ENCODE measurements at regions of chr1 and their contacts with region 1.

Region 1: DNA sequence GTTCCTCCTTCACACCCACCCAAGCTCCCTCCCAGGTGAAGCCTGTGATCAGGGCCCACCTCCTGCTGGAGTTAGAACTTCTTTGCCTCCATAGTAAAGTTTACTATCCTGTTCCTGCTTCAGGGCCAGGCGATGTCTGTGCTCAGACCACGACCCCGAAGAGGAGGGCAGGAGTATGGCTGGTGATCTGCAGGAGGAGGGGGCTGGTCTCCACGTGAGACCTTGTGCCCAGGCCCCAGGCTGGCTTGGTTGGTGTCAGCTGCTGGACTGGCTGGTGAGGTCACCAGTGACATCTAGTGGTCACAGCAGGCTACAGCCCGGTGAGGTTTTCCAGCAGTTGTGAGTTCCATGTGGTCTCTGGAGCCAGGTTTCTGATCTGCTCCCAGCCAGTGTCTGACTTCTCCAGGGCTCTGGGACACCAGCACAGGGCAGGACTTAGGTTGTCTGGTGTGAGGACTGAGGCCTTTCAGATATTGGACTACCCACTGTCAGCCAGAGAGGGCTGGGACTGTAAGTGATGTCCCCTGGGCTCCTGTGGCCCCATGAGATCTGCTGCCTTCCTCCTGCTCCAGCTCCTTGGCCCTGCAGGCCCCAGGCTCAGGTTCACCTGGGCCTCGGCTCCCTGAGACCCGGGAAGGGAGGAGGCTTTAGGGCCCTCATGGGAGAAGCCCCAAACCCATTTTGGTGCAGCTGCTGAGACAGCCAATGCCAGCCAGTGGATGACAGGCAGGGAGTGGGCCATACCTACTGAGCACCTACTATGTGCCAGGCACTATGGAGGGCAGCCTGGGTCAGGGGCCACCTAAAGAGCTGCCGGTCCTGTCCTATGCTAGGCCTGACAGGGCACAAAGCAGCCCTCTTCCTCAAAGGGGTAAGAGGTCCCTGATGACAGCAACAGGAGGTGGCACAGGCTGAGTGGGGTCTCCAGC is 6.0 kb upstream of the UBL4B start:
- DNase-seq: peak; percentile 83
- ATAC-seq: peak; percentile 97
- H3K4me3 Mint-ChIP-seq: no peak overlapping the region
- H3K27ac Mint-ChIP-seq: no peak overlapping the region
- H3K4me1 Mint-ChIP-seq: no peaks in the 10 kb centered on the region
- H3K27me3 Mint-ChIP-seq: no peaks in the 10 kb centered on the region
- CTCF ChIP-seq: peak; percentile 81

Region 2: DNA sequence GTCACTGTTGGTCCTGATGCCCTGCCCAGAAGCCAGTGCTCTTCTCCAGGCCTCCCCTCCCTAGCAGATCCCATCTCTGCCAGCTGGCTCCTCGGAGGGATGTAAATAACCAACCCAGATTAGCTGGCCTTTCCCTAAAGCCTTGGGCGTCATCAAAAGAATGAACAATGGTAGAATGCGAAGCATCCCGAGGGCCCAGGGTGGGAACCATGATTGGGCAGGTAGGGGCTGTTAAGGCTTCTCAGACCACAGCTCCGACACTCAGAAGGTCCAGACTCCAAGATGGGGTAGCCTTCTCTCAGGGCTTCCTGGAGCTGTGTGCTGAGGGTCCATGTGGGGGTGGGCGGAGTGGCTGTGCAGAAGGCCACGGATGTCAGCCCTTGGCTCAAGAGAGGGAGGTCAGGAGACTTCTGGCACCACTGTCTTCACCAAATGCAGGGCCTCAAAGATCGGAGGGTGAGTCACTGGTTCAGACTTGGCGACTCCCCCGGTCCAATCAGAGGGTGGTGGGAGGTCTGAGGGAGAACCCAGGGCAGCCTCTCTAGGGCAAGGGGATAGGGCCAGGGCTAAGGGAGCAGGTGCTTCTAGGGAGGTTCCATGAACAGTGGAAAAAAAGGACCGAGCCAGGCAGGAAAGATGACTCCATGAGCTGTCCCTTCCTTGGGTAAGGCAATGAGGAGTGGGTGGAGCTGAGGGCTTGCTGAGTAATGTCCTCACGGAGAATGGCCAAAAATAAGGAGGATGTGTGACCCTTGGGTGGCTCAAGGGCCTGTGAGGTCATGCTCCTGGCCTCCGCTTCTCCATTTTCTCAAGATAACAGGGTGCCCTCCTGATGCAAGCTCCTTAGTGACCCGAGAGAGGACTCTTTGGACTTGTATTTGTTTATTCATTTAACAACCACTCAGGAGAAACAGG is 284.2 kb before region 1 on chr1:
- CTCF ChIA-PET with region 1: no interaction called
- POLR2A ChIA-PET with region 1: no interaction called
- DNase-seq: no peak
- ATAC-seq: no peak
- H3K4me3 Mint-ChIP-seq: no peak overlapping the region
- H3K27ac Mint-ChIP-seq: no peak overlapping the region
- H3K4me1 Mint-ChIP-seq: peaks cover 9% of the 10 kb centered on the region
- H3K27me3 Mint-ChIP-seq: no peaks in the 10 kb centered on the region
- CTCF ChIP-seq: no peak

Region 3: DNA sequence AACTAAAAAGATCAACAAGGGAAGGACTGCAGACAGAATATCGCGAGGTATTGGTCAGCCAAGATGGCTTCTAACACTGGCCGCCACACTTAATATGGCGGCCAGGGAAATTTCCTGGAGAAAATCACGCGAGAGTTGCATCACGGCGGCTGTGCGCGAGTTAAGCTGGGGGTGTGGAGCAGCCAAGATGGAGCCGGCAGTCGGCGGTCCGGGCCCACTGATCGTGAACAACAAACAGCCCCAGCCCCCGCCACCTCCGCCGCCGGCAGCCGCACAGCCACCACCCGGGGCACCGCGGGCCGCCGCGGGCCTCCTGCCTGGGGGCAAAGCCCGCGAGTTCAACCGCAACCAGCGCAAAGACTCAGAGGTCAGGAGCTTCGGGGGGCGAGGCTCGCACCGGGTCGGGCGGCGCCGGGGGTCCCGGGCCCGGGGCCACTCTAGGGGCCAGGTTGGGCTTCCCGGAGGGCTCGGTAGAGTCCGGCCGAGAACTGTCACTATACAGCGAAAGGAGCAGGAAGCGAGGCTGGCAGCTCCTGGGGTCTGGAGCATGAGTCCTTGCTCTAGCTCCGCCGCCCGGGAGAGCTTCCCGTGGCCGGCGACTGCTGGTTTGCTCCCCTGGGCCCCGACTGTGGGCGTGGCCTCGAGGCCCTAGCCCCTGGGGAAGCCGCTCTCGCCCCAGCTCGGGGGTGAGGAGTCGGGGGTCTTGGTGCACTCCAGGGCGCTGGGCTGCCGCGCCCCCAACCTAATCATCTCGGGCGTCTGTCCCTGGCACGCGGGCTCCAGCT is 71.6 kb before region 1 on chr1 and contains the start of gene STRIP1:
- CTCF ChIA-PET with region 1: interaction called, 10 read pairs
- POLR2A ChIA-PET with region 1: no interaction called
- DNase-seq: peak; percentile 88
- ATAC-seq: peak; percentile 83
- H3K4me3 Mint-ChIP-seq: peak within 1 kb of the TSS; percentile 92
- H3K27ac Mint-ChIP-seq: peak within 1 kb of the TSS; percentile 95
- H3K4me1 Mint-ChIP-seq: peaks cover 33% of the 10 kb centered on the region
- H3K27me3 Mint-ChIP-seq: no peaks in the 10 kb centered on the region
- CTCF ChIP-seq: no peak
- total RNA-seq, gene STRIP1: 36.8 to 42.8 TPM (median 38.2 TPM) in 3 replicates

Region 4: DNA sequence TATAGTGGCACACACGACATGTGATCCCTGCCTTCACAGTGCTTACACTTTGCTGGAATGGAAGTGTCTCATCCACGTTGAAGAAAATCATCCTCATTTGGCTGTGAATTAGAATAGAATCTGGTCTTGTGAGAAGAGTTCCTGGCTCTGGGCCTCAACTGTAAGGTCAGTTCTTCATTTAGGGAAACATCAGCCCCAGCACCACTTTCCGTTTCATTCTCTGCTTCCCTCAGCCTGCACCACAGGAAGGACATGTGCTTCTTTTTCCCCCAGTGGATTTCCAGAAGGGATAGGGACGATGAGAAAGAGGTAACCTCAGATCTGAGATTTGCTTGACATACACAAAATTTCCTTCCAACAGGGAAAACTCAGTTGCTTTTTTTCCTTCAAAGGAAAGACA is 32.1 kb before region 1 on chr1:
- CTCF ChIA-PET with region 1: interaction called, 10 read pairs
- POLR2A ChIA-PET with region 1: no interaction called
- DNase-seq: no peak
- ATAC-seq: no peak
- H3K4me3 Mint-ChIP-seq: no peak overlapping the region
- H3K27ac Mint-ChIP-seq: no peak overlapping the region
- H3K4me1 Mint-ChIP-seq: 0 out of 2 replicates have a peak, but pooled peaks cover 4% of the 10 kb centered on the region
- H3K27me3 Mint-ChIP-seq: peaks cover 94% of the 10 kb centered on the region
- CTCF ChIP-seq: no peak

Region 5: GRCh38 chr1:110118636-110119615 is 12.6 kb after region 1 on chr1:
- CTCF ChIA-PET with region 1: interaction called, 39 read pairs
- POLR2A ChIA-PET with region 1: no interaction called
- DNase-seq: no peak
- ATAC-seq: no peak
- H3K4me3 Mint-ChIP-seq: no peak overlapping the region
- H3K27ac Mint-ChIP-seq: no peak overlapping the region
- H3K4me1 Mint-ChIP-seq: 0 out of 2 replicates have a peak, but pooled peaks cover 4% of the 10 kb centered on the region
- H3K27me3 Mint-ChIP-seq: peaks cover 15% of the 10 kb centered on the region
- CTCF ChIP-seq: no peak

Measured in WTC11 (cell line).